ENCODE measurements at regions of chr15 and their contacts with region 1.

Region 1: GRCh38 chr15:76330080-76330680 is 6.4 kb upstream of the ISL2 start:
- DNase-seq: no peak
- ATAC-seq: peak; percentile 93
- H3K4me3 ChIP-seq: no peak overlapping the region
- H3K27ac ChIP-seq: no peak overlapping the region
- H3K4me1 ChIP-seq: peaks cover under 1 to 14% of the 10 kb centered on the region in 2 experiments; a peak in 3 of 4 replicates
- H3K27me3 ChIP-seq: no peaks in the 10 kb centered on the region
- CTCF ChIP-seq: peak; percentile 47 to 67 (median 51); a peak in 5 of 6 replicates
- POLR2A ChIP-seq: no peak
- RAD21 ChIP-seq: peak; percentile 52

Region 2: GRCh38 chr15:76185716-76186115 is 144.5 kb before region 1 on chr15:
- CTCF ChIA-PET with region 1: interaction called, 16 read pairs
- POLR2A ChIA-PET with region 1: no interaction called
- RAD21 ChIA-PET with region 1: interaction called, 3 to 8 read pairs
- intact Hi-C with region 1: loop called (anchors 1 kb)
- DNase-seq: peak; percentile 77
- ATAC-seq: peak; percentile 93
- H3K4me3 ChIP-seq: no peak overlapping the region
- H3K27ac ChIP-seq: no peak overlapping the region
- H3K4me1 ChIP-seq: peaks cover 0 to 15% of the 10 kb centered on the region in 2 experiments; a peak in 2 of 4 replicates
- H3K27me3 ChIP-seq: no peaks in the 10 kb centered on the region
- CTCF ChIP-seq: peak; percentile 52 to 85 (median 79); a peak in 5 of 6 replicates
- POLR2A ChIP-seq: no peak
- RAD21 ChIP-seq: peak; percentile 74

Region 3: GRCh38 chr15:76190834-76191538 is 139.2 kb before region 1 on chr15:
- CTCF ChIA-PET with region 1: interaction called, 16 read pairs
- POLR2A ChIA-PET with region 1: no interaction called
- RAD21 ChIA-PET with region 1: interaction called in 1 of 2 experiments, 8 read pairs
- intact Hi-C with region 1: loop called (anchors 1 kb)
- DNase-seq: peak; percentile 46
- ATAC-seq: peak; percentile 94
- H3K4me3 ChIP-seq: no peak overlapping the region
- H3K27ac ChIP-seq: no peak overlapping the region
- H3K4me1 ChIP-seq: peaks cover 3 to 17% of the 10 kb centered on the region in 2 experiments
- H3K27me3 ChIP-seq: no peaks in the 10 kb centered on the region
- CTCF ChIP-seq: peak in 2 of 3 experiments; percentile 91; a peak in 4 of 6 replicates
- POLR2A ChIP-seq: no peak
- RAD21 ChIP-seq: no peak

Measured in HCT116 (cell line).